Common myeloid progenitor, CD34-positive (primary cell): ENCODE measurements at regions of chr17 and their contacts with region 1.

Region 1: GRCh38 chr17:47978324-47978723 is 7.4 kb downstream of the CDK5RAP3 start:
- DNase-seq: peak; percentile 57 to 81 (median 79)
- H3K4me3 ChIP-seq: no peak overlapping the region
- H3K27ac ChIP-seq: no peak overlapping the region
- H3K4me1 ChIP-seq: peaks cover 4 to 35% (median 30%) of the 10 kb centered on the region in 4 experiments
- H3K27me3 ChIP-seq: no peaks in the 10 kb centered on the region

Region 2: DNA sequence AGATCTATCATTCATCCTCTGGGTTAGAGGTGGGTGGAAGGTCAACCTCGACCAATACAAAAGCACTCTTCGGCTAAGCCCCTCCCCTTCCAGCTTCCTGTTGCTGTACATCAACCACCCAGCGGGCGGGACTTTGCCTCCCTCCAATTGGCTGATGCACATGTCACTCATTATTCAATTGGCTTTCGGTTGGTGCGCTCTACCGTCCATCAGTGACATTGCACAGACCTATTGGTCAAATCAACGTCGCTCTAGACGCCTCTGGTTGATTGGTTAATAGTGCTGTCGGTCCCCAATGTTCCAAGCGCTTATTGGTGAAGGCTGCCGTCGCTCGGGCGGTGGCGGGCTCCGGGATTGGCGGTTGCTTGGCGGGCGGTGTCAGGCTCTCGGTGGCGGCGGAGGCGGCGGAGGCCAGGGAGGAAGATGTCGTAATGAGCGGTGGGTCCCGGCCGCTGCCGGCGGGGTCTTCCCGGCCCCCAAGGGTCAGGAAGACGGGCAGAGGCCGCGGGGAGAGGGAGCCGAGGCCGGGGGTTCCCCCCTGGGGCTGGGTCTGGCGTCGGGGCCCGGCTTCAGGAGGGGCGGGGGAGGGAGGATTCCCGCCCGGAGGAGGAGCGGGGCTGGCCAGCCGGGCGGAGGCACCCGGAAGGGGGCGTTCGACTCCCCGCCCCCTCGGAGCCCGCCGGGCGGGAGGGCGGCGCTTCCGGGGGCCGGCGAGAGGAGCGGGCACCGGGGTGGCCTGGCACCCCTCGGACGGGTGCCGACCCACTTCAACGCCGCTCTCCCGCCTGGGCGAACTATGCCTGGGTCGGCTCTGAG is 82.3 kb before region 1 on chr17 and contains the start of gene SP2:
- CTCF ChIA-PET with region 1: no interaction called
- POLR2A ChIA-PET with region 1: no interaction called
- DNase-seq: peak; percentile 100
- H3K4me3 ChIP-seq: peak within 1 kb of the TSS; percentile 66 to 98 (median 94)
- H3K27ac ChIP-seq: peak within 1 kb of the TSS; percentile 91 to 97
- H3K4me1 ChIP-seq: peaks cover 15 to 31% (median 26%) of the 10 kb centered on the region in 4 experiments
- H3K27me3 ChIP-seq: no peaks in the 10 kb centered on the region

Region 3: DNA sequence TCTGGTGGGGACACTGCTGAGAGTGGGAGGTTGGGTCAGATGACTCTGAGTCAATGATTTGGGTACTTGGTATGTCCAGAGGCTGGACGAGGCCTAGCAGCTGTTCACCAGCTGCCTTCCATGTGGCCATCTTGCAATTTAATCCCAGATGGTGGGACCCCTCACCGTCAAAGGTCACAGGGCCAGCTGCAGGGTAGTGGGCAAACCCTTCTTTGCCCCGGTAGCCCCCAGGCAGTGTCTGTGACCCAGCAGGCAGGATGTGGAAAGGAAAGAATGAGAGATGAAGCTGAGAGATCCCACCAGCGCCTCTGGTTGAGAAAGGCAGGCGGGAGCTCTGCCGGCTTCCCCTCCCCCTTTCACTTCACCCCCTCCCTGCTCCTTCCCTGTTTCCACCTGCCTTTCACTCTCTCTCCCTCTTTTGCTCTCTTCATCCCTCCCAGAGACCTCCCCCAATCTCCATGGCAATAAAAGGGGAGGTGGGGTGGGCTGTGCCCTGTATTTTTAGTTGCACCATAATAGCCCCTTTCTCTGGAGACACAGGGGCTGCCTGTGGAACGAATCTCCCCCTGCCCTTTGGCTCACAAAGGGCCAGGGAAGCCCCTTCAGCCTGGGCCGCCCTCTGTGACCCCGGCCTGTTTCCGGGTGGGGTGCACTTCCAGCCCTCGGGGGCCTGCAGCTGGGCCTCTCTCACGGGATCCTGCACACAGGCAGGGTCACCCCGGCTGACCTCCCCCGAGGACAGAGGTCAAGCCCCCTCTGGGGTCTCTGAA is 12.8 kb after region 1 on chr17:
- CTCF ChIA-PET with region 1: interaction called, 79 read pairs
- POLR2A ChIA-PET with region 1: no interaction called
- DNase-seq: no peak
- H3K4me3 ChIP-seq: no peak overlapping the region
- H3K27ac ChIP-seq: no peak overlapping the region
- H3K4me1 ChIP-seq: peaks cover 0 to 3% (median under 1%) of the 10 kb centered on the region in 4 experiments
- H3K27me3 ChIP-seq: peaks cover 0 to 22% (median 3%) of the 10 kb centered on the region in 5 experiments

Region 4: GRCh38 chr17:48002266-48002915 is 24.1 kb after region 1 on chr17:
- CTCF ChIA-PET with region 1: interaction called, 79 read pairs
- POLR2A ChIA-PET with region 1: interaction called, 3 read pairs
- DNase-seq: peak; percentile 78 to 91 (median 88)
- H3K4me3 ChIP-seq: peak overlapping the region in 3 of 7 experiments; percentile 8 to 41 (median 34)
- H3K27ac ChIP-seq: peak overlapping the region in 1 of 2 experiments; percentile 71
- H3K4me1 ChIP-seq: peaks cover 0 to 50% (median 22%) of the 10 kb centered on the region in 4 experiments
- H3K27me3 ChIP-seq: no peaks in the 10 kb centered on the region